Testis (tissue), 5 donors: ENCODE measurements at regions of chr9 and their contacts with region 1.

Region 1: DNA sequence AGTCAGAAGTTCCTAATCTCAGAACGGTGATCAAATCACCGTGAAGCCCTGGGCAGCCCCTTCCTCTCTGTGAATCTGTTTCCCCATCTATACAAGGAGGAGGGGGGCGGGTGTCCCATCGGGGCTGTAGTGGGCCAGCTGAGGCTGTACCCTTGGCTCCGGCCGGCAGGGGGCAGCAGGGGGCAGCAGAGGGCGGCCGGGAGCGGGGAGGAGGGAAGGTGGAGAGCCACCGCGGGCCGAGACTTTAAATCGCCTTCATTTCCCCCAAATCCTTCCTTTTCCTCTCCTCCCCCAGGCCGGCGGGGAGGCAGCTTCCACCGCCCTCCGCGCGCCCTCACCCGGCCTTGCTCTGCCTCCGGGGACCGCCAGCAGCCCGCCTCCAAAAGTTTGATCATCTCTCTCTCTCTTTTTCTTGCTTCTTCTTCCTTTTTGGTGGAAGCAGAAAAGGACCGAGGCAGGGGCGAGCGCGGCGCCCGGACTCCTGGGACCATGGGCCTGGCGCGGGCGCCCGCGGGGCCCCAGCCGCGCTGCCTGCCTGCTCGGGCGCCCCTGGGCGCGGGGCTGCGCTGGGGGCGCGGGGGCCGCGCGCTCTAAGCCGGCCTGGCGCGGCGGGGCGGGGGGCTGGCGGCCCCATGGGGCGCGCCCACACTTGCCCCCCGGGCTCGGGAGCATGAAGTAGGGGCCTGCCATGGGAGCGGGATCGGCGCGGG is at the start of gene COL27A1:
- DNase-seq: peak; percentile 91
- H3K4me3 ChIP-seq: peak within 1 kb of the TSS; percentile 52 to 67
- H3K27ac ChIP-seq: peak within 1 kb of the TSS in 1 of 2 donors; percentile 30
- H3K4me1 ChIP-seq: peaks cover 15% of the 10 kb centered on the region
- H3K27me3 ChIP-seq: no peaks in the 10 kb centered on the region
- CTCF ChIP-seq: peak; percentile 89 to 93 (median 92)
- POLR2A ChIP-seq: no peak
- total RNA-seq, gene COL27A1: 25.7 to 68.8 TPM

Region 2: GRCh38 chr9:114271641-114272081 is 116.2 kb after region 1 on chr9:
- intact Hi-C with region 1: loop called (anchors 5 kb)
- DNase-seq: peak; percentile 73
- H3K4me3 ChIP-seq: no peak overlapping the region
- H3K27ac ChIP-seq: no peak overlapping the region
- H3K4me1 ChIP-seq: no peaks in the 10 kb centered on the region
- H3K27me3 ChIP-seq: no peaks in the 10 kb centered on the region
- CTCF ChIP-seq: peak; percentile 39 to 43 (median 43)
- POLR2A ChIP-seq: no peak